Activated CD8-positive, alpha-beta memory T cell treated with anti-CD3 and anti-CD28 coated beads, Interleukin-2, amount 10 ng/mL, durations not matched to agents 7 days and 5 days (primary cell): ENCODE measurements at regions of chr6 and their contacts with region 1.

Region 1: GRCh38 chr6:31827286-31828079 is at the start of gene HSPA1B:
- DNase-seq: peak; percentile 99
- ATAC-seq: peak; percentile 82
- H3K4me3 Mint-ChIP-seq: peak within 1 kb of the TSS; percentile 85
- H3K27ac Mint-ChIP-seq: peak within 1 kb of the TSS; percentile 97
- H3K4me1 Mint-ChIP-seq: peaks cover 52% of the 10 kb centered on the region
- H3K27me3 Mint-ChIP-seq: no peaks in the 10 kb centered on the region
- total RNA-seq, gene HSPA1B: 64.6 to 71.6 TPM

Region 2: GRCh38 chr6:30590994-30591393 is 1236.5 kb before region 1 on chr6:
- CTCF ChIA-PET with region 1: no interaction called
- DNase-seq: no peak
- ATAC-seq: no peak
- H3K4me3 Mint-ChIP-seq: no peak overlapping the region
- H3K27ac Mint-ChIP-seq: peak overlapping the region; percentile 52
- H3K4me1 Mint-ChIP-seq: no peaks in the 10 kb centered on the region
- H3K27me3 Mint-ChIP-seq: no peaks in the 10 kb centered on the region

Region 3: GRCh38 chr6:31631681-31632278 is 195.7 kb before region 1 on chr6:
- CTCF ChIA-PET with region 1: no interaction called
- DNase-seq: no peak
- ATAC-seq: no peak
- H3K4me3 Mint-ChIP-seq: no peak overlapping the region
- H3K27ac Mint-ChIP-seq: no peak overlapping the region
- H3K4me1 Mint-ChIP-seq: peaks cover 5% of the 10 kb centered on the region
- H3K27me3 Mint-ChIP-seq: no peaks in the 10 kb centered on the region

Region 4: DNA sequence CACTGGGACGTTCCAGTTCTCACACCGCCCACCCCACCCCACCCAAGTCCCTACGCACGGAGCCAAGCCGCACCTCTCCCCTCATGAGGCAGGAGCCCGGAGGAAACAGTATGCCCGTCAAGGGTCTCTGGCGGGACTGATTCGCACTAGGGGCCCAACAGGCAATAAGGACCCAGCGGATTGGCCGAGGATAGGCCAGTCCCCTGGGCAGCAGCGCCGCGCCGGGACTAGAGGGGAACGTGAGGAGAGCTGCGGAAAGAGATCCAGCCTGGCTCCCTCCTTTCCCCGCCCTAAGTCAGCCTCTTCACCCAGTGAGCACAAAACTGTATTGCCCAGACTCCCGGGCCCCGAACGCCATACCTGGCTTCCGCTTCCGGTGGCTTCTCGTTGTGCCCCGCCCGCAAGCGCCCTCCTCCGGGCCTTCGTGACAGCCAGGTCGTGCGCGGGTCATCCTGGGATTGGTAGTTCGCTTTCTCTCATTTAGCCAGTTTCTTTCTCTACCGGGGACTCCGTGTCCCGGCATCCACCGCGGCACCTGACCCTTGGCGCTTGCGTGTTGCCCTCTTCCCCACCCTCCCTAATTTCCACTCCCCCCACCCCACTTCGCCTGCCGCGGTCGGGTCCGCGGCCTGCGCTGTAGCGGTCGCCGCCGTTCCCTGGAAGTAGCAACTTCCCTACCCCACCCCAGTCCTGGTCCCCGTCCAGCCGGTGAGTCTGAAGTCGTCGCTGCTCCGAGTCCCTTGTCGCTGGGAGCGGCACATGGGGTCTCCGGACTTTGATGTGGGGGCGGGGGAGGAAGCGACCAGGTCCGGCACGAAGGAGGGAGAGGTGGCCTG is 161.8 kb before region 1 on chr6 and contains the start of gene CSNK2B:
- CTCF ChIA-PET with region 1: interaction called, 16 read pairs
- DNase-seq: peak; percentile 99
- ATAC-seq: peak; percentile 87
- H3K4me3 Mint-ChIP-seq: peak within 1 kb of the TSS; percentile 90
- H3K27ac Mint-ChIP-seq: peak within 1 kb of the TSS; percentile 95
- H3K4me1 Mint-ChIP-seq: peaks cover 60% of the 10 kb centered on the region
- H3K27me3 Mint-ChIP-seq: no peaks in the 10 kb centered on the region
- total RNA-seq, gene CSNK2B: 206 to 236 TPM

Region 5: GRCh38 chr6:31739639-31740396 is 87.7 kb before region 1 on chr6 and contains the start of gene MSH5:
- CTCF ChIA-PET with region 1: interaction called, 24 read pairs
- DNase-seq: peak; percentile 99
- ATAC-seq: peak; percentile 81
- H3K4me3 Mint-ChIP-seq: peak within 1 kb of the TSS; percentile 91
- H3K27ac Mint-ChIP-seq: peak within 1 kb of the TSS; percentile 96
- H3K4me1 Mint-ChIP-seq: peaks cover 45% of the 10 kb centered on the region
- H3K27me3 Mint-ChIP-seq: no peaks in the 10 kb centered on the region
- total RNA-seq, gene MSH5: 75.6 to 109 TPM

Region 6: DNA sequence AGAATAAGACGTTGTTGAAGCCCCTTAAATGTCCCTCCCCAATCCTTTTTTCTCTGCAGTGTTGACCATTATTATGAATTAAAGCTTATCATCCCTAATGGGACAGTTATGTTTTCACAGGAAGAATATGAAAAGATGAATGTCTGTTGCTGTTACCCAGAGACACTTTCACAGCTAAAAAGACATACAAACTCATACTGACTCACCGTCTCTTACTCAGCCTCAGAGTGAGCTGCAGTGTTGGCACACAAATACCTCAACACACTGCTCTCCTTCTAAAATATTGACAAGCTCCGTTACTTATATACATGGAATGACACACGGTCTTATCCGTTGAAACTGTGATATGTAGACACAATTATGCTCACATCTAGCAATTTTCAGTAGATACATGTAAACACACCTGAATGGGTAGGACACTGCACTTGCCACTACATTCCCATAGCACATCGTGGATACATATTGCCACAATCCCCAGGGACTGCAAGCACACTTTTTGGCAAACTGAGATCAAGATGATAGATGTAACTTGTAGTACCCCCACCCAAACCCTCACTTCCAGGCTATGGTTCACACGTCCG is 74.7 kb before region 1 on chr6:
- CTCF ChIA-PET with region 1: no interaction called
- DNase-seq: no peak
- ATAC-seq: no peak
- H3K4me3 Mint-ChIP-seq: no peak overlapping the region
- H3K27ac Mint-ChIP-seq: no peak overlapping the region
- H3K4me1 Mint-ChIP-seq: no peaks in the 10 kb centered on the region
- H3K27me3 Mint-ChIP-seq: no peaks in the 10 kb centered on the region

Region 7: GRCh38 chr6:31795616-31796298 is 31.7 kb before region 1 on chr6 and contains the start of gene VARS1:
- CTCF ChIA-PET with region 1: interaction called, 12 read pairs
- DNase-seq: peak; percentile 90
- ATAC-seq: peak; percentile 87
- H3K4me3 Mint-ChIP-seq: peak within 1 kb of the TSS; percentile 96
- H3K27ac Mint-ChIP-seq: peak within 1 kb of the TSS; percentile 98
- H3K4me1 Mint-ChIP-seq: peaks cover 48% of the 10 kb centered on the region
- H3K27me3 Mint-ChIP-seq: no peaks in the 10 kb centered on the region
- total RNA-seq, gene VARS1: 107 to 140 TPM

Region 8: GRCh38 chr6:31815025-31815838 is 12.3 kb before region 1 on chr6 and contains the starts of genes HSPA1A and HSPA1L:
- CTCF ChIA-PET with region 1: interaction called, 12 read pairs
- DNase-seq: peak; percentile 89
- ATAC-seq: peak; percentile 41
- H3K4me3 Mint-ChIP-seq: peak within 1 kb of the TSS; percentile 91
- H3K27ac Mint-ChIP-seq: peak within 1 kb of the TSS; percentile 95
- H3K4me1 Mint-ChIP-seq: peaks cover 56% of the 10 kb centered on the region
- H3K27me3 Mint-ChIP-seq: no peaks in the 10 kb centered on the region
- total RNA-seq, gene HSPA1A: 124 to 137 TPM
- total RNA-seq, gene HSPA1L: 2.9 to 3.1 TPM